Transverse colon (tissue), 4 donors: ENCODE measurements at regions of chr9 and their contacts with region 1.

Region 1: DNA sequence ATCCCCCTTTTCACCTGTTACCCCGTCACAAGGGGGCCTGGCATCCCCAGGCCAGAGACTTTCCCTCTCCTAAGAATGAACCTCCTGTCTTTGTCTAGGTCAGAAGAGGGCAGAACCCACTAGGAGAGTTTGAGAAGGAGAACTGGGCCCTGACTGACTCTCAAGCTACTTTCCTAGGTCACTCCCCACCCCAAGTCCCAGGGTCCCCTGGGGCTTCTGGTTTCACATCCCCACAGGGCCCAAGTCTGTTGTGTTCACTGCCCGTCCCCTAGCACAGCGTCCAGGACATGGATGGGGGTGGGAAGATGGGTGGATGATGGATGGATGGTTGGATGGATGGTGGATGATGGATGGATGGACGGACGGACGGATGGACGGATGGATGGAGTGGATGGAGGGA is 50.3 kb downstream of the KCNT1 start:
- DNase-seq: no peak
- H3K4me3 ChIP-seq: no peak overlapping the region
- H3K27ac ChIP-seq: no peak overlapping the region
- H3K4me1 ChIP-seq: no peaks in the 10 kb centered on the region
- H3K27me3 ChIP-seq: no peaks in the 10 kb centered on the region
- CTCF ChIP-seq: no peak
- EP300 ChIP-seq: no peak
- POLR2A ChIP-seq: no peak

Region 2: DNA sequence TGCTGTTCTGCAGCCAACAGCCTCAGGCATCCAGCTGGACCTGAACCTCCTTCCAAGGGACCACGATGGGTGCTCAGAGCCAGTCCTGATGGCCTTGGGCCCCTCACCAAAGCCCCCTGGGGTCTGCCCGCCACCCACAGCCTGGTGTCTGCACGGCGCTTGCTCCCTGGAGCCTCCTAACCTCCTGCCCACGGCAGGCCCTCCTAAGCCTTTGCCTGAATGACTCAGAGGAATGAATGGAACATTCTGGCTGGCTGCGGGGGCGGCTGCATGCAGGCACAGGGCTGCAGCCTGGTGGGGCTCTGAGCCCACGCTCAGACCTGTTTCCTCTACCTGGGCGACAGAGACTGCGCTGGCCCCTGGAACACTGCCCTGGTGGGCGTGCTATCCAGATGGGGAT is 59.9 kb before region 1 on chr9:
- in situ Hi-C with region 1: no loop called
- intact Hi-C with region 1: no loop called
- DNase-seq: no peak
- H3K4me3 ChIP-seq: no peak overlapping the region
- H3K27ac ChIP-seq: no peak overlapping the region
- H3K4me1 ChIP-seq: no peaks in the 10 kb centered on the region
- H3K27me3 ChIP-seq: no peaks in the 10 kb centered on the region
- CTCF ChIP-seq: no peak
- EP300 ChIP-seq: no peak
- POLR2A ChIP-seq: no peak

Region 3: DNA sequence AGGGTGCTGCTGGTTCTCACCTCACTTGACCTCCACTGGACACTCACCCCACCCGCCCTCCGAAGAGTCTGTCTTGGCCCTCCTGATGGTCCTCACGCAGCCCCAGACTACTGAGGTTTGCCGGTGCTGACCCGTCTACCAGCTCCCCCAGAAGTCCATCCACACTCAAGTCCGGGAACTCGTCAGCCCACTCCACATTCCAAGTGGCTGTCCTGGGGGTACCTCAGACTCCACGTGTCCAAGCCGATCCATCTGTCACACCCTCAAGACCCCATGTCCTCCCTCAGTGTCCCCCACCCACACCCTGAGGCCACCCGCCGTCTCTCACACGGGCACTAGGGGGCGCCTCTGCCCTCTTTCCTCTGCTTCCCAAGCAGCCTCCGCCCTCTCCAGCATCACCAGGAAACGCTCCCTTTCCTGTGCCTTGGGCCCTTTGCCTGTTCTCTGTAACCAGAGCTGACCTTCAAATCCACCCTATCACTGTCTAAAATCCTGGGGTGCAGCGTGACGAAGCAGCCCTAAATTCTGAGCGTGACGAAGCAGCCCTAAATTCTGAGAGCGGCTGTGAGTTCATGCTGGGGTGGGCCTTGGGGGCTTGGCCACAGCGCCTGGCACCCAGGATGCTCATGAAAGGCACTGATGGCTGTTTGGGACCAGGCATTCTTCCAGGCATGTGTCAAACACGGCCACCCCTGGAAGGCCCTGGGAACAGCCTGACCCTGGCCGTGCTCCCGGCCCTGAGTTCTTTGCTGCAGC is 45.4 kb after region 1 on chr9:
- in situ Hi-C with region 1: no loop called
- intact Hi-C with region 1: loop called (anchors 1 kb)
- DNase-seq: no peak
- H3K4me3 ChIP-seq: no peak overlapping the region
- H3K27ac ChIP-seq: no peak overlapping the region
- H3K4me1 ChIP-seq: no peaks in the 10 kb centered on the region
- H3K27me3 ChIP-seq: no peaks in the 10 kb centered on the region
- CTCF ChIP-seq: peak in 4 of 5 experiments; percentile 22 to 30 (median 24)
- EP300 ChIP-seq: no peak
- POLR2A ChIP-seq: no peak

Region 4: DNA sequence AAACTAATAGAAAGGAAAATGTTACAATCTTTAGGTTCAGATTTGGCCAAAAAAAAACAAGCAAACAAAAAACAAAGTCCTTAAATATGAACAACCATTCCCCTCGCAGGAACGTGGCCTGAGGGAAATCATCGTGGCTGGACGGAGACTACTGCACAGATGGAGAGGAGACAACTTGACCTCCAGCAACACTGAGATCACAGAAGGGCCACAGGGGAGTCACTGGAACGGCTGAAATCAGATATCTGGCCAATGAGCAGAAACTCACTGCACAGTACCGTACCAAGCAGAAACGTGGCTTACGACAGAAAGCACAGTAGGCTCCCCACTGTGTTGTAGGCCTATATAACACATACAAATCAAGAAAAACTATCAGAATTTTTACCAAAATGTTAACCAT is 127.3 kb after region 1 on chr9:
- in situ Hi-C with region 1: no loop called
- intact Hi-C with region 1: no loop called
- DNase-seq: no peak
- H3K4me3 ChIP-seq: no peak overlapping the region
- H3K27ac ChIP-seq: no peak overlapping the region
- H3K4me1 ChIP-seq: peaks cover 0 to under 1% (median 0%) of the 10 kb centered on the region in 4 donors
- H3K27me3 ChIP-seq: no peaks in the 10 kb centered on the region
- CTCF ChIP-seq: no peak
- EP300 ChIP-seq: no peak
- POLR2A ChIP-seq: no peak

Region 5: GRCh38 chr9:136122425-136123383 is 370.4 kb after region 1 on chr9:
- in situ Hi-C with region 1: no loop called
- intact Hi-C with region 1: no loop called
- DNase-seq: peak; percentile 78
- H3K4me3 ChIP-seq: peak overlapping the region in 1 of 4 donors; percentile 23
- H3K27ac ChIP-seq: no peak overlapping the region
- H3K4me1 ChIP-seq: peaks cover 6 to 24% (median 18%) of the 10 kb centered on the region in 4 donors
- H3K27me3 ChIP-seq: peaks cover 20% of the 10 kb centered on the region
- CTCF ChIP-seq: peak; percentile 94 to 98 (median 97)
- EP300 ChIP-seq: no peak
- POLR2A ChIP-seq: no peak